CD8-positive, alpha-beta T cell (primary cell): ENCODE measurements at regions of chr16 and their contacts with region 1.

Region 1: GRCh38 chr16:31202414-31203375 is at the start of gene PYCARD:
- DNase-seq: peak in 5 of 9 experiments; percentile 21 to 59 (median 43)
- ATAC-seq: peak; percentile 24
- H3K4me3 ChIP-seq: peak within 1 kb of the TSS; percentile 93 to 96
- H3K4me3 Mint-ChIP-seq: peak within 1 kb of the TSS; percentile 91
- H3K27ac ChIP-seq: peak within 1 kb of the TSS; percentile 53 to 64
- H3K27ac Mint-ChIP-seq: peak within 1 kb of the TSS; percentile 88
- H3K4me1 ChIP-seq: peaks cover 46% of the 10 kb centered on the region
- H3K4me1 Mint-ChIP-seq: peaks cover 46% of the 10 kb centered on the region
- H3K27me3 ChIP-seq: no peaks in the 10 kb centered on the region
- H3K27me3 Mint-ChIP-seq: no peaks in the 10 kb centered on the region
- CTCF ChIP-seq: no peak
- total RNA-seq, gene PYCARD: 6.4 to 6.6 TPM

Region 2: GRCh38 chr16:31188450-31189411 is 14.0 kb before region 1 on chr16:
- CTCF ChIA-PET with region 1: interaction called, 10 read pairs
- POLR2A ChIA-PET with region 1: interaction called, 104 read pairs
- intact Hi-C with region 1: no loop called
- DNase-seq: peak in 2 of 9 experiments; percentile 31 to 51
- ATAC-seq: no peak
- H3K4me3 ChIP-seq: no peak overlapping the region
- H3K4me3 Mint-ChIP-seq: no peak overlapping the region
- H3K27ac ChIP-seq: peak overlapping the region in 1 of 2 experiments; percentile 41
- H3K27ac Mint-ChIP-seq: peak overlapping the region; percentile 74
- H3K4me1 ChIP-seq: peaks cover 59% of the 10 kb centered on the region
- H3K4me1 Mint-ChIP-seq: peaks cover 77% of the 10 kb centered on the region
- H3K27me3 ChIP-seq: no peaks in the 10 kb centered on the region
- H3K27me3 Mint-ChIP-seq: no peaks in the 10 kb centered on the region
- CTCF ChIP-seq: no peak

Region 3: DNA sequence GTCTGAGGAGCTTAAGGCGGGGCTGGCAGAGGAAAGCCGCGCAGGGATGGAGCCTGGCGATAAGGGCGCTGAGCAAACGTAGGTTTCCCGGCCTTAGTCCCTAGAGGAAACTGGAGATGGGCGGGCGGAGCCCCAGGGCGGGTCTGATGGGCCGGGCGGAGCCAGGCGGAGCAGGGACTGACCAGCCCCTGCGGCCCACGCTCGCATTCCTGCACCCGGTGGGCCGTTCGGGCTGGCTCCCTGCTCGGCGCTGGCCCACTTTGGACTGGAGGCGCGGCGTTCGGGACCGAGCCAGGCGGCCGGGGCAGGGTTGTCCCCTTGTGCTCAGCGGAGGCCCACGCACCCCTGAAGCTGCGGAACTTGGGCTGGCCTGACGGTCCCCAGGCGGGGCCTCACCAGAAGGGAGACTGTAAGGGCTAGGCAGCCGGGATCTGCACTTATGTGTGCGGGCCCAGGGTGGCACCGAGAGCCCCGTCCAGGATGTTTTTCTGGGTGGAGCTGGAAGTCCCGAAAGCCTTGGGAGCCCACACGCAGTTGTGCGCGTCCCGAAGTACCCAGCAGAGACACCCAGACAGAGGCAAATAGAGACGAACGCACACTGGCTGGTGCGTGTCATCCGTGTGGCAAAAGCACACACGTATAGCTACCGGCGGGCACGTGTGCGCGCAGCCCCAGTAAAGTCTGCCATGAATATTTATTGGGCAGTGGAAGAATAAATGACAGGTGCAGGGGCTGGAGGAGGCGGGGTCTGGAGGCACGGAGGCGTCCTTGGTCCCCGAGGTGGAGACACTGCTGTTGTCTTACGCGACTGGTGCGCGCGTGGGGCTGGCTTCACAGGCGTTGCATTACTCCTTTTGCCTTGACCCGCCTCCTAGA is 12.8 kb after region 1 on chr16:
- CTCF ChIA-PET with region 1: interaction called, 5 read pairs
- POLR2A ChIA-PET with region 1: interaction called, 28 read pairs
- intact Hi-C with region 1: no loop called
- DNase-seq: peak in 4 of 9 experiments; percentile 29 to 55 (median 46)
- ATAC-seq: peak; percentile 70
- H3K4me3 ChIP-seq: peak overlapping the region; percentile 24 to 34
- H3K4me3 Mint-ChIP-seq: peak overlapping the region; percentile 80
- H3K27ac ChIP-seq: no peak overlapping the region
- H3K27ac Mint-ChIP-seq: no peak overlapping the region
- H3K4me1 ChIP-seq: peaks cover 27% of the 10 kb centered on the region
- H3K4me1 Mint-ChIP-seq: peaks cover 13% of the 10 kb centered on the region
- H3K27me3 ChIP-seq: peaks cover 24 to 33% of the 10 kb centered on the region in 2 experiments
- H3K27me3 Mint-ChIP-seq: peaks cover 28% of the 10 kb centered on the region
- CTCF ChIP-seq: no peak

Region 4: DNA sequence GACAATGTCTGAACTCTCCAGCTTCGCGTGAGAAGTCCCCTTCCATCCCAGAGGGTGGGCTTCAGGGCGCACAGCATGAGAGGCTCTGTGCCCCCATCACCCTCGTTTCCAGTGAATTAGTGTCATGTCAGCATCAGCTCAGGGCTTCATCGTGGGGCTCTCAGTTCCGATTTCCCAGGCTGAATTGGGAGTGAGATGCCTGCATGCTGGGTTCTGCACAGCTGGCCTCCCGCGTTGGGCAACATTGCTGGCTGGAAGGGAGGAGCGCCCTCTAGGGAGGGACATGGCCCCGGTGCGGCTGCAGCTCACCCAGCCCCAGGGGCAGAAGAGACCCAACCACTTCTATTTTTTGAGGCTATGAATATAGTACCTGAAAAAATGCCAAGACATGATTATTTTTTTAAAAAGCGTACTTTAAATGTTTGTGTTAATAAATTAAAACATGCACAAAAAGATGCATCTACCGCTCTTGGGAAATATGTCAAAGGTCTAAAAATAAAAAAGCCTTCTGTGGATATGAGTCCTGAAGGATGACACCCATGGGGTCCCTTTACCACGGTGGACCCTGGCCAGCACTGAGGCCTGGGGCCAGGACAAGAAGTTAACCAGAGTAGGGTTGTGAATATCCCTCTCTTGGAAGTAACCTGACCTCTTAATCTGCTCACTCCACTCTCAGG is 179.9 kb after region 1 on chr16:
- CTCF ChIA-PET with region 1: interaction called, 20 read pairs
- POLR2A ChIA-PET with region 1: no interaction called
- intact Hi-C with region 1: loop called (anchors 2 to 5 kb)
- DNase-seq: peak; percentile 35 to 81 (median 66)
- ATAC-seq: peak; percentile 60
- H3K4me3 ChIP-seq: no peak overlapping the region
- H3K4me3 Mint-ChIP-seq: no peak overlapping the region
- H3K27ac ChIP-seq: no peak overlapping the region
- H3K27ac Mint-ChIP-seq: no peak overlapping the region
- H3K4me1 ChIP-seq: peaks cover 1% of the 10 kb centered on the region
- H3K4me1 Mint-ChIP-seq: peaks cover 9% of the 10 kb centered on the region
- H3K27me3 ChIP-seq: no peaks in the 10 kb centered on the region
- H3K27me3 Mint-ChIP-seq: peaks cover 4% of the 10 kb centered on the region
- CTCF ChIP-seq: peak; percentile 72

Region 5: DNA sequence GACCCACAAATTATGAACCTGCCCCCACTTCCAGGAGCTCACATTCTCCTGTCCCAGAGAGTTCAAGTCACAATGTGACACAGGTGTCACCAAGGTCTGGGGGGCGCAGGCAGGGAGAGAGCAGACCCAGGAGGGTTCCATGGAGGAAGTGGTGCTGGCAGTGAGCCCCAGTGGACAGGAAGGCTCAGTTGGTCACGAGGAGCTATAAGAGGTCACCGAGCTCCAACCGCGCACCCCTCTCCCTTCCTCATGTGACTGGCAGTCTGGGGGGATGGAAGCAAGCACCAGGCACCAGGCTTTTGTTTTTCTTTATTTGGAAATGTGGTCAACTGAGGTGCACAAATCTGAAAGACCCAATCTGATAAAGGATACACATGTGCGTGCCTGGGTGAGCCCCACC is 193.0 kb after region 1 on chr16:
- CTCF ChIA-PET with region 1: no interaction called
- POLR2A ChIA-PET with region 1: no interaction called
- intact Hi-C with region 1: no loop called
- DNase-seq: no peak
- ATAC-seq: no peak
- H3K4me3 ChIP-seq: no peak overlapping the region
- H3K4me3 Mint-ChIP-seq: no peak overlapping the region
- H3K27ac ChIP-seq: no peak overlapping the region
- H3K27ac Mint-ChIP-seq: no peak overlapping the region
- H3K4me1 ChIP-seq: peaks cover 14% of the 10 kb centered on the region
- H3K4me1 Mint-ChIP-seq: peaks cover 11% of the 10 kb centered on the region
- H3K27me3 ChIP-seq: no peaks in the 10 kb centered on the region
- H3K27me3 Mint-ChIP-seq: no peaks in the 10 kb centered on the region
- CTCF ChIP-seq: no peak